Caco-2 (cell line): ENCODE measurements at regions of chr4 and their contacts with region 1.

Region 1: GRCh38 chr4:164731827-164732474 is 22.0 kb upstream of the SMIM31 start:
- DNase-seq: peak; percentile 37 to 63
- H3K4me3 ChIP-seq: no peak overlapping the region
- H3K4me3 Mint-ChIP-seq: no peak overlapping the region
- H3K27ac Mint-ChIP-seq: no peak overlapping the region
- H3K4me1 ChIP-seq: no peaks in the 10 kb centered on the region
- H3K4me1 Mint-ChIP-seq: no peaks in the 10 kb centered on the region
- H3K27me3 ChIP-seq: no peaks in the 10 kb centered on the region
- H3K27me3 Mint-ChIP-seq: peaks cover 3% of the 10 kb centered on the region
- CTCF ChIP-seq: peak; percentile 78 to 84

Region 2: GRCh38 chr4:164700471-164700870 is 31.5 kb before region 1 on chr4:
- CTCF ChIA-PET with region 1: interaction called, 3 read pairs
- POLR2A ChIA-PET with region 1: no interaction called
- intact Hi-C with region 1: loop called (anchors 1 kb)
- DNase-seq: peak; percentile 35 to 38
- H3K4me3 ChIP-seq: no peak overlapping the region
- H3K4me3 Mint-ChIP-seq: no peak overlapping the region
- H3K27ac Mint-ChIP-seq: no peak overlapping the region
- H3K4me1 ChIP-seq: no peaks in the 10 kb centered on the region
- H3K4me1 Mint-ChIP-seq: no peaks in the 10 kb centered on the region
- H3K27me3 ChIP-seq: no peaks in the 10 kb centered on the region; the same call in 1 of the 2 replicates
- H3K27me3 Mint-ChIP-seq: peaks cover 7% of the 10 kb centered on the region
- CTCF ChIP-seq: peak; percentile 16 to 26

Region 3: GRCh38 chr4:164716901-164717300 is 15.1 kb before region 1 on chr4:
- CTCF ChIA-PET with region 1: no interaction called
- POLR2A ChIA-PET with region 1: no interaction called
- intact Hi-C with region 1: loop called (anchors 1 kb)
- DNase-seq: peak in 1 of 2 experiments; percentile 34
- H3K4me3 ChIP-seq: no peak overlapping the region
- H3K4me3 Mint-ChIP-seq: no peak overlapping the region
- H3K27ac Mint-ChIP-seq: no peak overlapping the region
- H3K4me1 ChIP-seq: no peaks in the 10 kb centered on the region
- H3K4me1 Mint-ChIP-seq: no peaks in the 10 kb centered on the region
- H3K27me3 ChIP-seq: no peaks in the 10 kb centered on the region
- H3K27me3 Mint-ChIP-seq: peaks cover 3% of the 10 kb centered on the region
- CTCF ChIP-seq: peak; percentile 33 to 57